Astrocyte of the cerebellum (primary cell): ENCODE measurements at regions of chr9 and their contacts with region 1.

Region 1: DNA sequence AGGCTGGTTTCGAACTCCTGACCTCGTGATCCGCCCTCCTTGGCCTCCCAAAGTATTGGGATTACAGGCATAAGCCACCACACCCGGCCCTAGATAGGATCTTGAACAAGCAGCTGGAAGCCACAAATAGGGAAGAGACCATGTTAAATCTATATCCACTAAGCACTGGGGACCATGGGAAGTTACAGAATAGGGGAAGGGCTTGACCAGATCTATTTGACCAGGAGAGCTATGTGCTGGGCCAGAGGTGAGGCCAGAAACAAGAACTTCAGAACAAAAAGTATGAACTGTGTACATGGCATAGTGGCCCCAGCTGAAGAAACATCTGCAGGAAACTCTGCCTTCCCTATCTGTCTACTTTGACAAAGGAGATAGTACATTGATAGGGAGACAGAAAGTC is 10.8 kb downstream of the KLF4 start:
- DNase-seq: no peak
- H3K4me3 ChIP-seq: no peak overlapping the region
- CTCF ChIP-seq: no peak

Region 2: DNA sequence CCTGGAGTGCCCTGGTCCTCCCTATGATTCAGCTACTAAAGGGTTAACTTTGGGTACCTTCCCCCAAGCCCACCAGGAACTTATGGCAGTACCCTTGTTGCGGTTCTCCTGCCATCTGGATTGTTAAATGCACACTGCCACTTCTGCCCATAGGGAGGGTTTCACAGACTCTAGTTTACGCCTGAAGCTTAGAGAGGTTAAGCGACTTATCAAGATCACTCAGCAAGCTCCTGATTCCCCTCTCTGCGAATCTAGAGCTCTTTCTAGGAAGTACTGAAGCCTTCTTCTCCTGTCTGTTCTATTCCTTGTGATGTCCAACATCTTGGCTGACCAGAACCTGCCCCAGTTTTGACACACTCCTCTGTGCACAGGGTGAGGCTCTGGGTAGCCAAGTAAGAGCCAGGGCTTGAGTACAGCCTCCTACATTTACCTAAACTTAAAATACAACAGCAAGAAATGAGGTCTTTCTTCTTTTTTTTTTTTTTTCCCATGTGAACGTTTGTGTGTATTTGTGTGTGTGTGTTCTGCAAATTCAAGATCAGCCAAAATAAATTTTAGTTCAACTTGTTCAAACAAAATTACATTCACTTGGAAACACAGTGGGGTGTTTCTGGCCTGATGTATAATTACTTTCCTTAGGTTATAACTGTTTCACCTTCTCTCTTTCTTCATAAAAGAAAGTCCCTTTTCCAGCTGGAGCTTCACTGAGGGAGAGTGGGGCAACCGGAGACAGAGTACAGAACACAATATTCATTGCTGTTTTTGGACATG is 39.4 kb after region 1 on chr9:
- in situ Hi-C with region 1: no loop called
- DNase-seq: no peak
- H3K4me3 ChIP-seq: no peak overlapping the region
- CTCF ChIP-seq: no peak

Region 3: DNA sequence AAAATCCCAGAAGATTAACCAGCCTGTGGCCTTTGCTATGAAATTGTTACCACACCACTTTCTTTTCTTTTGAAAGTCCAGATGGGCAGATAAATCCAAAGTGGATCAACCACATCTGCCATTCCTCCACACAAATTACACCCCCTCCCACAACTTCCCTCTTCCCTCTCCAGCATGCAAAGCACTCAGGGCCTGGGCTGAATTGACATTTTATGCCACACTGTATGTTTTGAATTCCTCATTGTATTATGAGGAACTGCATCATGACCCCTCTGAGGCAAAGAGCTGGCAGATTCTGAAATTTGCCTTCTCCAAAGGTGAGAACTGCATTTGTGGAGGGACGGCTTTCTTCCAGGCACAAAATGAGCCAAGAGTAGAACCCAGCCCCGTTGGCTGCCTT is 600.0 kb after region 1 on chr9:
- in situ Hi-C with region 1: loop called (anchors 5 kb)
- DNase-seq: no peak
- H3K4me3 ChIP-seq: no peak overlapping the region
- CTCF ChIP-seq: no peak